H1 (cell line): ENCODE measurements at regions of chr1 and their contacts with region 1.

Region 1: DNA sequence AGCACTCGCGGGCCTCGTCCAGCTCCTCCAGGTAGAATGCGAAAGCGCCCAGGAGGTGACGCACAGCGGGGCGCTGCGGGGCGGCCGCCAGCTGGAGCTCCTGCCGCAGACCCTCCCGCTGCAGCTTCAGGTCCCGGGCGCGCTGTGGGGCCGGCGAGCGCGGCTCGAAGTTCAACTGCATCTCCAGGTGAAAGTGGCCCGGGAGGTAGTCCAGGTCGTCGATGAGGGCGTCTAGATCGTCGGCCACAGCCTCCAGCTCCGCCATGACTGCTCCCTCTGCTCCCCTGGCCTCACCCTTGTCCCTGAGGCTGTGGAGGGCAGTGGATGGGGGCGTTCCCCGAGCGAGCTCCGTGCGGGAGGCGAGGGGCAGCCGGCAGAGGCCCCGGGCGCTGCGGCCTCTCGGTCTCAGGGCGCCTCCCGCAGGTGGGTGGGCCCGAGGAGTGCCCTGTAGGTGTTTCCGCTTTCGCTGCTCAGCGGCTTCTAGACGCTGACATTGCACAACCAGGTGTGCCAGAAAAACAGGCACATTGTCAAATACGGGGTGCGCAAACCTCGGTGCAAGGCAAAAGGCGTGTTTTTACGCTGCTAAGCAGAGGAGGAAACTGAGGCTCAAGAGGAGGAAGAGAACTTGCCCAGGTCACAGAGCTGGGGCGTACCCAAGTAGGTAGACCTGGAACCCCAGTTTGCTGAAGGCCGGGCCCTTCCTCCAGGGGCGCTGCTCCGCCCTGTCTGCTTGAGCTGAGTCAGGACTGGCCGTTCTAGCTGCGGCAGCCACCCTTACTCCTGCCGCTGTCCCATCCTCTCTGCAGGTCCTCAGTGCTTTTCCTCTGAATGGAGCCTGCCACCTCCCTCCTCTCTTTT is at the start of gene TTC22:
- DNase-seq: peak in 1 of 2 experiments; percentile 73
- H3K4me3 ChIP-seq: peak within 1 kb of the TSS; percentile 19 to 51 (median 22); a peak in 7 of 8 replicates
- H3K27ac ChIP-seq: no peak within 1 kb of the TSS
- H3K4me1 ChIP-seq: peaks cover 0 to 8% (median under 1%) of the 10 kb centered on the region in 4 experiments; a peak in 3 of 7 replicates
- H3K27me3 ChIP-seq: peaks cover 5 to 23% (median 16%) of the 10 kb centered on the region in 4 experiments; a peak in 6 of 7 replicates
- CTCF ChIP-seq: peak; percentile 32 to 72 (median 51); a peak in 3 of 4 replicates
- EP300 ChIP-seq: no peak
- POLR2A ChIP-seq: no peak
- RAD21 ChIP-seq: peak; percentile 56 to 67
- total RNA-seq, gene TTC22: 1.1 and 1.6 TPM in 2 replicates

Region 2: DNA sequence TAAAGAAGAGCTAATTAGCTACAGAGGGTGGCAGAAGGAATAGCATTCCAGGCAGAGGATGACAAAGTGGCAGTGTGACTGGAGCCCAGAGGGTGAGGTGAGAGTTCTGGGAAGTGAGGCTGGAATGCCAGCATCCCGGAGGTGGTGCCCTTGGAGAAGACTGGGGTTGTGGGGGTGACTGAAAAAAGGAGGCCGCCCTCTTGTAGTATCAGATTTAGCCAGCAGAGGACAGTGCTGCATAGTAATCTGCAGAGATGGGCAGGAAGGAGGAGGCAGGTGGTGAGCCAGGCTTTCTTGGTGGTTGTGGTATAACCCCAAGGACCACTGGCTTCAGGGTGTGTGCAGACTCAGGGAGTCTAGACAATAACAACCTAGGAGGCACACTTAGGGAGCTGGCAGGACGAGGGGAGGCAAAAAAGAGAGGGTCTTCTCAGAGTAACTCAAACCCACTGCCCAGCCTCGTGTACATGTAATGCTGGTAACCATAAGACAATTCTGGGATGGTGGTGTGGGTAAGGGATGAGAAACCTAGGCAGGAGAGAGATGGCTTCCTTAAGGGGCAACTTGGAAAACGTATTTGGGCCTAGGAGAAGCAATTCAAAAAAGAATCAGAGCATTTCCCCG is 129.0 kb before region 1 on chr1:
- CTCF ChIA-PET with region 1: interaction called, 10 read pairs
- POLR2A ChIA-PET with region 1: interaction called, 4 read pairs
- DNase-seq: peak; percentile 38 to 95
- H3K4me3 ChIP-seq: no peak overlapping the region
- H3K27ac ChIP-seq: no peak overlapping the region
- H3K4me1 ChIP-seq: peaks cover 0 to 3% (median 0%) of the 10 kb centered on the region in 4 experiments; a peak in 1 of 7 replicates
- H3K27me3 ChIP-seq: no peaks in the 10 kb centered on the region
- CTCF ChIP-seq: peak; percentile 75 to 97 (median 94)
- EP300 ChIP-seq: no peak
- POLR2A ChIP-seq: no peak
- RAD21 ChIP-seq: peak; percentile 96 to 99

Region 3: GRCh38 chr1:54764133-54764921 is 36.8 kb before region 1 on chr1 and contains the start of gene PARS2:
- CTCF ChIA-PET with region 1: interaction called, 20 read pairs
- POLR2A ChIA-PET with region 1: no interaction called
- DNase-seq: peak; percentile 95 to 97
- H3K4me3 ChIP-seq: peak within 1 kb of the TSS; percentile 71 to 93 (median 84)
- H3K27ac ChIP-seq: peak within 1 kb of the TSS; percentile 70
- H3K4me1 ChIP-seq: no peaks in the 10 kb centered on the region; a peak in 2 of 7 replicates
- H3K27me3 ChIP-seq: no peaks in the 10 kb centered on the region
- CTCF ChIP-seq: peak in 1 of 3 experiments; percentile 9; a peak in 1 of 4 replicates
- EP300 ChIP-seq: no peak
- POLR2A ChIP-seq: peak; percentile 77 to 96
- RAD21 ChIP-seq: no peak; a peak in 1 of 4 replicates
- total RNA-seq, gene PARS2: 10.0 and 10.4 TPM in 2 replicates